ENCODE measurements at regions of chr15 and their contacts with region 1.

Region 1: DNA sequence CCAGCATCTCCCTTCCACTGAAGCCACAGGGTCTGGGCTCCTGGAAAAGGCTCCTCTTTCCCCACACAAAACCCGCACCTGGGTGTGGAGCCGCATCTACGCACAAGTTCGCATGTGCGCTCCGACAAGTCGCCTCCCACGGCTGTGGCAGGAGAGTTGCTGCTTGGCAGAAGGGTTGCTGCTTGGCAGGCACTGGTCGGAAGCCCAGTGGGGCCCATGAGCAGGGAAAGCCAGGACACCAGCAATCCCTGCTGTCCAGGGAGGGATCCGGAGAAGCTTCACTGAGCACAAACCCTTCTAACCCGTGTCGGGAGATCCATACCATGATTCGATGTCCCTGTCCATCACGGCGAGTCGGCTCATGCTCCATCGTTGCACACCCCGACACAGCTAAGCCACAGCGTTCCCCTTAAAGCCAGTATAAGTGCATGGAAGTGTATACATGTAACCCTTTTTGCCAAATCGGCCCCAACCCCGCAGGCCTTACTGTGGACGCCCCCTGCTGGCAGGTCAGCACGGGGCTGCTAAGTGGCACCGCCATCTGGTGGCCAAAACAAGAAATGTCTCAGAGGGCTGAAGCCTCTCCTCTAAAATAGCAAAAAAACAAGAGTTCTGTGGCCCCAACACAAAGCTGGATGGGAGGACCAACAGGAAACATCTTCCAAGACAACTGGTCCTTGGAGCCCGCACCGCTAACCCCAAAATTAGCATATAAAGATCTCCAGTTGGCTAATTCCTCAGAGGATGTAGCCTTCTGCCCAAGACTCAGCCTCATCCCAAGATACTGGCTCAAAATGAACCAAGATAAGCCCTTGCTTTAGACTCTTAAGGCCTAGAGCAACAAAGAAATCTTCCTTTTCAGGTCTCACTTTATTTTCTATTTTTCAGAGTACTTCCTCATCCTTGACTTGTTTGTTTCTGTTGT is 8.3 kb downstream of the ANKRD63 start:
- DNase-seq: peak; percentile 16
- H3K4me3 ChIP-seq: no peak overlapping the region
- CTCF ChIP-seq: peak; percentile 100

Region 2: GRCh38 chr15:40108855-40109735 is 165.5 kb before region 1 on chr15 and contains the start of gene BMF:
- CTCF ChIA-PET with region 1: interaction called, 26 read pairs
- POLR2A ChIA-PET with region 1: no interaction called
- DNase-seq: peak; percentile 91
- H3K4me3 ChIP-seq: peak within 1 kb of the TSS; percentile 81
- CTCF ChIP-seq: peak; percentile 31

Region 3: DNA sequence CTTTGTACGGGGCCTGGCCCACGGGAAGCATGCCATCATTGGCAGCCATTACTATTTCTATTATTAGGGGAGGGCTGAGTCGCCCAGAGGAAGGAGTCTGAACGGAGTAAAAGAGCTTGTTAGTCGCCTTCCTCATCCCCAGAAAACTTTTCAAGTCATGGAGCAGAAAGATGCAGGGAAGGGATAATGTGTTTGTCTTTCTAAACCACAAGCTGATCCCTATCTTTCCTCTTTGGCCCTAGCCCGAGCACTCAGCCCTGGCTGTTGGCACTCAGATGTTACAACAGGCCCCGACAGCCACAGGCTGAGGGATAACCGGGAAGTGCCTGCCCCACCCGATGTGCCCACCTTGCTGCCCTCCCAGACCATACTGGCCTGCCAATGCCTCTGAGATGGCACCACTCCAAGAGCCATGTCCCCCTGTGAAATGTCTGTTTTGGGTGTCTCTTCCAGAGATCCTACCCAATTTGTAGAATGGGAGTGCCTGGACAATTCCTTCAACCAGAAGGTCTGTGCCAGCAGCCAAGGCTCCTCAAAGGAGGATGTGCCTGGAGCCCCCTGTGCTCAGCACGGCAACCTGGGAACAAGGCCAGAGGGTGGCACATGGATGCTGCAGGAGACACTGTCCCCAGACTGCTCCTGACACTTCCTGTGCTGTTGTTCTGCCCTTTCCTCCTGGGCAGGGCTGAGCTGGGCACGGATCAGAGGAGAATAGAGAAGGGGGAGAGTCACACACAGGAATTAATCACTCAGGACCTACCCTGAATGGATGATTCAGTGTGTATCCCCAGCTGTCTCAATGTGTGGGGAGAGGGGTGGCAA is 24.9 kb before region 1 on chr15:
- CTCF ChIA-PET with region 1: interaction called, 1,718 read pairs
- POLR2A ChIA-PET with region 1: no interaction called
- DNase-seq: peak; percentile 41
- H3K4me3 ChIP-seq: no peak overlapping the region
- CTCF ChIP-seq: no peak

Region 4: DNA sequence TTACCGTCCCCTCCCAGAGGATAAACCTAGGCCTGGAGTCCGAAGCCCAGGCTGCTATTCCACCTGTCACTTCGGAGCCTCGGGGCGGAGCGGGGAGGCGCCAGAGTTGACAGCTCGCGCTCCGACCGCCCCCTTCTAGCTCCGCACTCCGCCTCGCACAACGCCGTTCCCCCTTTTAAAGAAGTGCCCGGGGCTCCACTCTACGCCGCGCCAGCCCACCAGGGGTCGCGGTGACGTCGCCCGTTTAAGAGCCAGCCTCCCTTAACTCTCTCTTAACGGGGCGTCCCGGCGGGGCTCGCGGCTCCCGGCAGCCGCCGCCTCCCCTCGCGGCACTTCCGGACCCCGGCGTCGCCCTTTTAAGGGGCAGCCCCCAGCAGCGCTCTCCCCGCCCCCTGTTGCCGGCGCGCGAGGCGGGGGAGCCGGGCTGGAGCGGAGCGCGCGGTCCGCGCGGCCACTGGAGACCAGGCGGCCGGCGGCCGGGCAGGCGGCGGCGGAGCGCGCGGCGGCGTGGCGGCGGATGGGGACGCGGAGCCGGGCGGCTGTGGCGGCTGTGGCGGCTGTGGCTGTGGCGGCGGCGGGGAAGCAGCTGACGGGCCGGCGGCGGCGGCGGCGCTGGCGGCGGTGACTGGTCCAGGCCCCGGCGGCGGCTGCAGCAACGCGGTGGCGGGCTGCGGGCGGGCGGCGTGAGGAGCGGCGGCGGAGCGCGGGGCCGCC is 48.8 kb after region 1 on chr15 and contains the start of gene INAFM2:
- CTCF ChIA-PET with region 1: interaction called, 500 read pairs
- POLR2A ChIA-PET with region 1: no interaction called
- DNase-seq: no peak
- H3K4me3 ChIP-seq: peak within 1 kb of the TSS; percentile 73
- CTCF ChIP-seq: peak; percentile 70

Region 5: DNA sequence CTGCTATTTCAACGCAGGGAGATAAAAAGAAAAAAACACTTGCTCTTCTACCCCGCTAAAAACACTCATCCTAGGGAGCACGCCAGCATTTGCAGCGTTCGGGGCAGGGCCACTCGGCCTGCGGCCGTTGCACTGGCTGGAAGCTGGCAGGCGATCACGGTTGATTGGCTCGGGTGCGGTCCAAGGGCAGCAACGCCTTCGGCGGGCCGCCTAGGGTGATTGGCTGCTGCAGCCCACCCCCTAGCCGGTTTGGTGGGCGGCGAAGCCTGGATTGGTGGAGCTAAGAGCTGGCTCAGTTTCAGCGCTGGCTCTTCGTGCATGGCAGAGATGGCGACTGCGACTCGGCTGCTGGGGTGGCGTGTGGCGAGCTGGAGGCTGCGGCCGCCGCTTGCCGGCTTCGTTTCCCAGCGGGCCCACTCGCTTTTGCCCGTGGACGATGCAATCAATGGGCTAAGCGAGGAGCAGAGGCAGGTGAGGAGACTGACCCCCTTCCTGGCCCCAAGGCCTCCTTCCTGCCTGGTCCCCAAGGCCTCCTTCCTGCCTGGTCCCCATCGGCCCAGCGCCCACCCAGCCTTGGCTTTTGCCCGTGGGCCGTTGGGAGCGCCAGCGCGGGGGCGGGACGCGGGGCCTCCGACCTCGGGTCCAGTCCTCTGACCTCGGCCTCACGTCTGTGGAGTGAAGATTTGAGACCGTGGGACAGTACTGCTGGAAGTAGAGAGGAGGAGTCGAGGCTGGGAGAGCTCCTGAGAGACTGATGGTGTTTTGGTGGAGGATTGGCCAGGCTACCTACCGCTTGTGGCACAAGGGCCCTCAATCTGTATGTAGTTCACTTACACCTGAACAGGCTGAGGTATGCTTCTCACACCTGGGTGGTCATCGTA is 131.1 kb after region 1 on chr15 and contains the start of gene IVD:
- CTCF ChIA-PET with region 1: interaction called, 12 read pairs
- POLR2A ChIA-PET with region 1: no interaction called
- DNase-seq: peak; percentile 71
- H3K4me3 ChIP-seq: peak within 1 kb of the TSS; percentile 93
- CTCF ChIP-seq: no peak

Region 6: DNA sequence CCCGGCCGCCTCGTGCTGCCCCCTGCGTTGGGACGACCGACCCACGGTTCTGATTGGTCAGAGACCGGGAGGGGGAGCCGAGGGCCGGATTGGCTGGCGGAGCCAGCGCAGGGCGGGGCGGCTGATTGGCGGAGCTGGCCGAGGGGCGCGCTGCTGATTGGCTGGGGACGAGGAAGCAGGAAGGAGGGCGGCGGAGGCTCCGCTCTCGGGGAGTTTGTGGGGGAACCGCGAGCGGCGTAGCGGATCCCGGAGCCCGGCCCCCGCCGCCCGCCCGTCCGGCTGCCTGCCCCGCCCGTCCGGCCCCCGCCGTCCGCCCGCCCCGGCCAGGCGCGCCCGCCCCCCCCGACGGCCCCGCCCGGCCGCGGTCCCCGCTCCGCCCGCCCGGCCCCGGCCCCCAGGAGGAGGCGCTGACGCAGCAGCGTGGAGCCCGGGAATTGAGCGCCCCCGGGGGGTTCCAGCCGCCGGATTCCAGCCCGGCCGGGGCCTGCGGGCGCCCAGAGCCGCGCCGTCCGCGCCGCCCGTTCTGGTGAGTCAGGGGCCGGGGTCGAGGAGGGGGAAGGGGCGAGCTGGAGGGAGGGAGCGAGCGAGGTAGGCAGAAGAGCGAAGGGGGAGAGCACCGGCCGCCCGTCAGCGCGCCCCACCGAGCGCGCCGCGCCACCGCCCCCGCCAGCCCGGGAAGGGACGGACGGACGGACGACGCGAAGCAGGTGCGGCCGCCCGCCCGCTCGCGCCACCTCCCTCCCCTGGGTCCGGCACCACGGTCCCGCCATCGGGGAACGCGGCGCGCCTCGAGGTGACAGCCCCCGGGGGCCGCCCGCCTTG is 166.3 kb after region 1 on chr15 and contains the start of gene BAHD1:
- CTCF ChIA-PET with region 1: interaction called, 11 read pairs
- POLR2A ChIA-PET with region 1: no interaction called
- DNase-seq: peak; percentile 49
- H3K4me3 ChIP-seq: peak within 1 kb of the TSS; percentile 67
- CTCF ChIP-seq: peak; percentile 23

Region 7: DNA sequence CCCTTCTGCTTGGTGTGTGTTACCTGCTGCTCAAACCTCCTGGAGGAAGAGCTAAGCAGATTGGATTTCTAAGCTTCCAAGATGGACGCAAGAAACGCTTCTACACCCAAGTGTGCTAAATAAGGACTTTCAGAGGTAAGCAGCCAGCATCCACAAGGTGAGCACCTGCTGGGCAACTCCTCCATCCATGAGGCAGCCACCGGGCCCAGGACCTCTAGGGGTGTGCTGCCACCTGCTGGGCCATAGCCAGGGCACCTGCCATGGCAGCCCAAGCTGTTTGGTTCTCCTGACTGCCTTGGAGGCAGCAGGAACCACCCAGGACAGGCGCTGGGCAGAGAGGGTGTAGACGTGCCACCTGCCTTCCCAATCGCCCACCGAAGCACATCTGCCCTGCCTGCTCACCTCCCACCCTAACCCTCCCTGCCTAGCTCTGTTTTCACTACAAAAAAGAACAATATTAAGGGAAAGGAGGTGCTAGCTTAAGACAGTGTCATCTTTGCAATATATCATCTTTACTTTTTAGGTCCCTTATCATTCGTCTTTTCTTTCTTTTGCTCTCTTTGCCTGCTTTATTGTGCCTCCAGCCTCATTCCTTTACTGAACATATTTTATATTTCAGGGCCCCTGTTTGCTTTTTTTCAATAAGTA is 508.1 kb after region 1 on chr15:
- CTCF ChIA-PET with region 1: no interaction called
- POLR2A ChIA-PET with region 1: no interaction called
- DNase-seq: no peak
- H3K4me3 ChIP-seq: no peak overlapping the region
- CTCF ChIP-seq: peak; percentile 55